CD14-positive monocyte (primary cell): ENCODE measurements at regions of chr20 and their contacts with region 1.

Region 1: GRCh38 chr20:49063279-49063678 is 17.2 kb downstream of the CSE1L start:
- DNase-seq: no peak
- H3K4me3 ChIP-seq: no peak overlapping the region
- H3K4me3 Mint-ChIP-seq: no peak overlapping the region
- H3K27ac ChIP-seq: no peak overlapping the region
- H3K27ac Mint-ChIP-seq: no peak overlapping the region
- H3K4me1 ChIP-seq: no peaks in the 10 kb centered on the region
- H3K4me1 Mint-ChIP-seq: no peaks in the 10 kb centered on the region
- H3K27me3 ChIP-seq: no peaks in the 10 kb centered on the region
- H3K27me3 Mint-ChIP-seq: no peaks in the 10 kb centered on the region
- CTCF ChIP-seq: no peak

Region 2: DNA sequence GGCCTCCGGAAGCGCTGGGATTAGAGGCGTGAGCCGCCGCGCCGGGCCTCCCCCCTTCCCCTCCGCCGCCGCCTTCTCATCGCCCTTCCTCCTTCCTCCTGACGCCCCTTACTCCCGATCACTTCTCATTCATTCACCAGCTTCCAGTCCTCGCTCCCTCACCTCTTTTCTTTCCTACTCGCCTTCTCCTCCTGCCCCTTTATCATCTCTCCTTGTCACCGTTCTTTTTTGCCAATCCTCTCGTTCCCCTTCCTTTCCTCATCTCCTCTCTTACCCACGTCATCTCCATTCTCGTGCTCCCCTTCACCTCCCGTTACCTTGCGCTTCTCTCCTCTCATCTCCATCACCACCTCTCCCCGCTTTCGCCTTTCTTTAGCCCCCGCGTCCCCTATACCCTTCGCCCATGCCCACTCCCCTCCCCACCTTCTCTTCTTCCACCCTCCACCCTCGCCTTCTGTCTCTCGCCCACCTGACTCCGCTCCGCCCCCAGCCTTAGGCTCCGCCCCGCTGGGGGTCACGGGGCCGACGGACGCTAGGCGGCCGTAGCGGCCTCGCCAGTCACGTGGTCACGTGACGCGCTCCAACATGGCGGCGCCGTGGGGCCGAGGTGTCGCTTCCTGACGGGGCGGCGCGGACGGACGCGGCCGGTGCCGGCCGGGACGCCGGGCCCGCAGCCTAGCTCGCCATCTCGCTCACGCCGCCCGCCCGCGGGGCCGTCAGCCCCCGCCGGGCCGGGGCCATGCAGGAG is 142.0 kb before region 1 on chr20 and contains the start of gene ARFGEF2:
- intact Hi-C with region 1: no loop called
- DNase-seq: peak; percentile 92 to 95 (median 93)
- H3K4me3 ChIP-seq: peak within 1 kb of the TSS; percentile 66 to 80 (median 77)
- H3K4me3 Mint-ChIP-seq: peak within 1 kb of the TSS; percentile 94 to 97
- H3K27ac ChIP-seq: peak within 1 kb of the TSS; percentile 88 to 98
- H3K27ac Mint-ChIP-seq: peak within 1 kb of the TSS; percentile 99 to 100 (median 100)
- H3K4me1 ChIP-seq: peaks cover 43 to 52% of the 10 kb centered on the region in 2 donors
- H3K4me1 Mint-ChIP-seq: peaks cover 57% of the 10 kb centered on the region
- H3K27me3 ChIP-seq: no peaks in the 10 kb centered on the region
- H3K27me3 Mint-ChIP-seq: peaks cover 0 to 3% (median 1%) of the 10 kb centered on the region in 3 donors
- CTCF ChIP-seq: no peak
- polyA plus RNA-seq, gene ARFGEF2: 4.6 to 10.9 (median 5.5) TPM

Region 3: GRCh38 chr20:49024220-49024619 is 39.1 kb before region 1 on chr20:
- intact Hi-C with region 1: loop called in 1 of 2 experiments (anchors 5 kb)
- DNase-seq: no peak
- H3K4me3 ChIP-seq: no peak overlapping the region
- H3K4me3 Mint-ChIP-seq: no peak overlapping the region
- H3K27ac ChIP-seq: peak overlapping the region in 1 of 2 donors; percentile 26
- H3K27ac Mint-ChIP-seq: no peak overlapping the region
- H3K4me1 ChIP-seq: no peaks in the 10 kb centered on the region
- H3K4me1 Mint-ChIP-seq: no peaks in the 10 kb centered on the region
- H3K27me3 ChIP-seq: no peaks in the 10 kb centered on the region
- H3K27me3 Mint-ChIP-seq: no peaks in the 10 kb centered on the region
- CTCF ChIP-seq: no peak